A549 (cell line): ENCODE measurements at regions of chr14 and their contacts with region 1.

Region 1: GRCh38 chr14:74612350-74613021 is 449 bp upstream of the LTBP2 start:
- DNase-seq: peak; percentile 55 to 78
- ATAC-seq: peak; percentile 75 to 84
- H3K4me3 ChIP-seq: peak overlapping the region; percentile 66
- H3K27ac ChIP-seq: peak overlapping the region; percentile 89 to 91
- H3K4me1 ChIP-seq: peaks cover 54% of the 10 kb centered on the region
- CTCF ChIP-seq: peak; percentile 100
- EP300 ChIP-seq: peak in 1 of 2 experiments; percentile 35; a peak in 1 of 5 replicates
- POLR2A ChIP-seq: no peak
- RAD21 ChIP-seq: peak; percentile 34 to 76; a peak in 3 of 5 replicates

Region 2: DNA sequence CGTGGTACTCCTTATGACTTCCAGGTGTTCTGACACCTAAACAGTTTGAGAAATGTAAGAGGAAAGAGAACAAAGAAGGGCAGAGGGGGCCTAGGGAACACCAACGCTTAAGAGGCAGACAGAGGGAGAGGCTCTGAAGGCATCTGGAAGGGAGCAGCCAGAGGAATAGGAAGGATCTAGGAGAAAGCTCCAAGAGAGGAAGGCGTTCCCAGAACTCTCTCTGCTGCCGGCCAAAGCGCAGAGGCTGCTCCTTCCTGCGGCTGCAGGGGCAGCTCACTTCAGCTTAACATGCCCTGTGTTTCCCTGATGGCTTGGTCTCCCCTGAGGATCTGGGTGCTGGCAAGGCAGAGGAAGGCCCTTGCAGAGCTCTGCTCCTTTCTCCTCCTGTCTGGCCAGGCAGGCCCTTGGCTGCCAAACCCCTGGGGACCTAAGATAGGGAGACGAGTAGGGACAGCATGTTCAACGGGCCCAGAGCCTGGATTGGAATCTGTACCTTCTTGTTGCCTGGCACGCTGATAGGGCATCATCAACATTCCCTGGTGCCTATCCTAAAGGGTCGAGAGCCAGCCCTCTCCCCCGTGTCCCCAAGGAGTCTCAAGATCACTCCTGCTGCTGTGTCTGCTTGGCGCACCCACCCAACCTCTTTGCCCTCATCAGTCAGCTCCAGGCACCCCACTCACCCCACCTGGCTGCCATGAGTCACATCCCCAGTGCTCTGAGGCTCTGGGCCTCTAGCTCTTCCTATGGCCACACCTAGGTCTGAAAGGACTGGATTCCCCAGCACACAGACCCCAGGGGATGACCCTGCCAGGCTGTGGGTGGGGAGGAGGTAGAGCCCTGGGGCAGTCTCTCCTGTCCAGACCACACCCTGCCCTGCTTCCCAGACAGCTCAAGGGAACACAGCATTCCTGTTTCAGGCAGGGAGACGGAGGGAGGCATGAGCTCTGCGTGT is 46.0 kb before region 1 on chr14:
- CTCF ChIA-PET with region 1: interaction called, 42 read pairs
- POLR2A ChIA-PET with region 1: interaction called, 10 read pairs
- DNase-seq: peak; percentile 66 to 83
- ATAC-seq: peak; percentile 61 to 78
- H3K4me3 ChIP-seq: no peak overlapping the region
- H3K27ac ChIP-seq: peak overlapping the region; percentile 86 to 95
- H3K4me1 ChIP-seq: peaks cover 75% of the 10 kb centered on the region
- CTCF ChIP-seq: no peak
- EP300 ChIP-seq: peak in 1 of 2 experiments; percentile 54; a peak in 1 of 5 replicates
- POLR2A ChIP-seq: no peak
- RAD21 ChIP-seq: no peak

Region 3: DNA sequence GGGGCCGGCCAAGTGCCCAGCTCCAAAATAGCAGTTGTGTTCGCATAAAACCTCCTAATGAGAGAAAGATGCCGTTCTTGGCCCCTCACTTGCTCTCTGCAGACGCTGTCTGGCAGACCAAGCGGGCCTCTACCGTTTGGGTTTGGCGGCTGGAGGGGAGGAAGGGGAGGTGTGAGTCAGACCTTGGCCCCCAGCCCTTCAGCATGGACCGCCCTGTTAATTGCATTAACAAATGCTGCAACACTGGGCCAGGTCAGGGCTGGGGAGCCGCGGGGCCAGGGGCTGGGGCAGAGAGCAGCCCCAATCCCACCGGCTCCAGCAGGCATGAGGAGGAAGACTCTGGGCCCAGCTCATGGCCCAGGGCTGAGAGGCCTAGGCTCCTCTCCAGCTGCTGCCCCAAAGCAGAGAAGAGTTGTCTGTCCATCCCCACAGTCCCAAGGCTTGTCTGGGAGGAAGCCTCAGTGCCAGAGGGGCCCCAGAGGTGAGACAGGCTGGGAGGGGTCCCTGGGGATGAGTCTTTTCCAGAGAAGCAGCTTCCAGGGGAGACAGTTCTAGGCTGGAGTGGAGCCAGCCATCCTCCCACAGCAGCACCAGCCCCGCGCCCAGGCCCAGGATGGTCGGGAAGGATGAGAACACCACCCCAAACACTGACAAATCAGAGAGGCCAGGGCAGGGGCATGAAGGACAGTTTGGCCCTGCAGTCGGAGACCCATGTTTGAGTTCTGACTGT is 17.3 kb before region 1 on chr14:
- CTCF ChIA-PET with region 1: interaction called, 120 read pairs
- POLR2A ChIA-PET with region 1: no interaction called
- DNase-seq: no peak
- ATAC-seq: no peak; a peak in 1 of 6 replicates
- H3K4me3 ChIP-seq: no peak overlapping the region
- H3K27ac ChIP-seq: peak overlapping the region in 1 of 2 experiments; percentile 36; a peak in 2 of 6 replicates
- H3K4me1 ChIP-seq: no peaks in the 10 kb centered on the region
- CTCF ChIP-seq: no peak
- EP300 ChIP-seq: no peak
- POLR2A ChIP-seq: no peak
- RAD21 ChIP-seq: no peak

Region 4: DNA sequence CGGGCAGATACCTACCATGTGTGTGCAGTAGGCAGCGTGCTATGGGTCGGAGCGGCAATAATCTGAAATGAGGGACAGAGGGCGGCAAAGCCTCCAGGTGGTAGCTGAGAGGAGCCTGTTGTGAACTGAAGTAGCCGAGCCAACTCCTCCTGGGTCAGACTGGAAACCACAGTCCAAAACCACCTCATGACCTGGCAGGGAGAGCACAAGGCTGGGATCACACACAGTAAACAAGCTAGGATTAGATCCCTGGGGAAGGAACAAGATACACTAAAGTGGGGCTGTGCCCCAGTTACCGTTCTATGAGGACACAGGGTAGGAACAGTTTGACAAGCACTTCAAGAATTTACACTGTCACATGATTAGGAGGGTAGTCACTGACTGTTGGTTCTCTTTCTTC is 51.4 kb after region 1 on chr14:
- CTCF ChIA-PET with region 1: interaction called, 40 read pairs
- POLR2A ChIA-PET with region 1: no interaction called
- DNase-seq: no peak
- ATAC-seq: peak; percentile 22 to 28; a peak in 2 of 6 replicates
- H3K4me3 ChIP-seq: no peak overlapping the region
- H3K27ac ChIP-seq: no peak overlapping the region
- H3K4me1 ChIP-seq: peaks cover 17% of the 10 kb centered on the region
- CTCF ChIP-seq: no peak
- EP300 ChIP-seq: no peak
- POLR2A ChIP-seq: no peak
- RAD21 ChIP-seq: no peak

Region 5: DNA sequence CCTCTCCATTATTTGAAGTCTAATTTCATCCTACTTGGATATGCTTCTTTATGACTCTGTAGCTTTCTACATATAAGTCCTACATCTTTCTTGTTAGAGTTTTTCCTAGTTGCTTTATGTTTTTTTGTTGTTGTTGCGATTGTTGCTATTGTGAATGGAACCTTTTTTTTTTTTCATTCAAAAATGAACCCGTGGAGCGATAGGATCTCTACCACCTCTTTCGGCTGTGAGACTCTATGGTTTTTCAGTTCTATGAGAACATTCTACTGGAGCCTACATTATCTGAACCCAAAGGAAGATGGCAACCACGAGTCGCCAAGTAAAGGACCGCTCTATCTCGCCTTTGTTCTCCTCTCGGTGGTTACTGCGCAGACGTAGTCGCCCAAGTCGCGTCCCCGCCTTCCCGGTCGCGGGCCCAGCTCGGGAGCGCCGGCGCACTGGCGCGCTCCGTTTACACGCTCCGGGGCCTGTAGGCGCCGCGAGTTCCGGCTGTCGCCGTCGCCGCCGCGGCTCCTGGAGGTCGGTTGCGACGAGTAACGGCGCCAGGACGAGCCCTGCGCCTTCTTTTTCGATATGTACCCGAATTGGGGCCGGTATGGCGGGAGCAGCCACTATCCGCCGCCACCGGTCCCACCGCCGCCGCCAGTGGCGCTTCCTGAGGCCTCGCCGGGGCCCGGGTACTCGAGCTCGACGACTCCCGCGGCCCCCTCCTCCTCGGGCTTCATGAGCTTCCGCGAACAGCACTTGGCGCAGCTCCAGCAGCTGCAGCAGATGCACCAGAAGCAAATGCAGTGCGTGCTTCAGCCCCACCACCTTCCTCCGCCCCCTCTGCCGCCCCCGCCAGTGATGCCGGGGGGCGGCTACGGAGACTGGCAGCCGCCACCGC is 150.7 kb after region 1 on chr14 and contains the start of gene YLPM1:
- CTCF ChIA-PET with region 1: interaction called, 14 read pairs
- POLR2A ChIA-PET with region 1: interaction called, 8 read pairs
- DNase-seq: peak; percentile 91 to 98
- ATAC-seq: peak; percentile 98
- H3K4me3 ChIP-seq: peak within 1 kb of the TSS; percentile 95
- H3K27ac ChIP-seq: peak within 1 kb of the TSS; percentile 87 to 98
- H3K4me1 ChIP-seq: peaks cover 20% of the 10 kb centered on the region
- CTCF ChIP-seq: peak; percentile 56
- EP300 ChIP-seq: no peak
- POLR2A ChIP-seq: peak; percentile 91
- RAD21 ChIP-seq: no peak
- polyA plus RNA-seq, gene YLPM1: 20.3 and 25.3 TPM in 2 replicates

Region 6: DNA sequence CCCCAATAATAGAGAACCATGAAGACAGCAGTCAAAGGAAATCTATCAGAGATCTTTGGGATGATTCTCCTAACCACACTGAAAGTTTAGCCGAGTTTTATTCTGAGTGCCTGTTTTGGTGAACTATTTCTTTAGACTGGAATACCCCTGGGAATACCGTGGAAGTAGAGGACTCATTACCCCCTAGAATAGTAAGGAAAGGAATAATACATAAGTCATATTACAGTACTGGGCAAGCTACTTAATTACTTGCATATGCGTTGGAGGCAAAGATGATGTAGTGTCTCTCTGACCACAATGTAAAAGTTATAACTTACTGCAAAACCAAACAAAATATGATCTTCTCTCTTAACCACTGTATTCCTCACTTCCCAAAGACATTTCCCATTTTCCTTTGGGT is 482.4 kb after region 1 on chr14:
- CTCF ChIA-PET with region 1: no interaction called
- POLR2A ChIA-PET with region 1: no interaction called
- DNase-seq: no peak
- ATAC-seq: no peak
- H3K4me3 ChIP-seq: no peak overlapping the region
- H3K27ac ChIP-seq: no peak overlapping the region
- H3K4me1 ChIP-seq: no peaks in the 10 kb centered on the region
- CTCF ChIP-seq: no peak
- EP300 ChIP-seq: no peak
- POLR2A ChIP-seq: no peak
- RAD21 ChIP-seq: no peak